Natural killer cell (primary cell): ENCODE measurements at regions of chr18 and their contacts with region 1.

Region 1: DNA sequence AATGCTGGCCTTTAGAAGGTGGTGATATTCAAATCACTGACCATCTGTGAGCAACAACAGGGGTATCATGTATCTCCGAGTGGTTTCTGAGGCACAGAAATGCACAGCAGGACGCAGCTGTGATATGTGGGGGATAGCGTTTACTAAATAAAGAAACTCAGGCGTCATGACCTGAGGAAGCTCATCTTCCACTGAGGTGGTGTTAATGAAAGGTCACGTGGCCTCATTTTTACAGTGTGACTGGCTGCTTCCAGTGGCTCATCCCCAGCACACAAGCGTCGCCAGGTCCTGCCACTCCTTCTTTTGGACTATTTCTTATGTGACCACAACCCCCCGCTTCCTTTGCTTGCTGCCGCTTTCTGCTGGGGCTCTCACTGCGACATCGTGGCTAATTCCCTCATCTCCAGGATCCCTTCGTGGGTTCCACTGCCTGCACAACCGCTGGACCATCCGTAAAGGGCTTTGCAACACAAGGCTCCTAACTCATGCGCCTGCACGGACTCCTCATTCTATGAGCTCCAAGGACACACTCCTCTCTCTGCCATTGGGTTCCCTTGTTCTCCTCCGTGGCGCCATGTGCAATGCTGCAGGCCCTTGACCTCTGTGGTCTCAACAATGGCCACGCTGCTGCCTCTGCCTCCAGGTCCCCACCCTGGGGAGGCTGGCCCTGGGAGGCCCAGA is 109.3 kb downstream of the MBP start:
- DNase-seq: no peak
- ATAC-seq: peak; percentile 25 to 81 (median 78)
- H3K4me3 ChIP-seq: no peak overlapping the region
- H3K4me3 Mint-ChIP-seq: peak overlapping the region; percentile 77
- H3K27ac ChIP-seq: no peak overlapping the region
- H3K27ac Mint-ChIP-seq: peak overlapping the region; percentile 82 to 89
- H3K4me1 ChIP-seq: peaks cover 52% of the 10 kb centered on the region
- H3K4me1 Mint-ChIP-seq: peaks cover 66 to 77% of the 10 kb centered on the region in 2 donors
- H3K27me3 ChIP-seq: no peaks in the 10 kb centered on the region
- H3K27me3 Mint-ChIP-seq: no peaks in the 10 kb centered on the region
- CTCF ChIP-seq: no peak

Region 2: DNA sequence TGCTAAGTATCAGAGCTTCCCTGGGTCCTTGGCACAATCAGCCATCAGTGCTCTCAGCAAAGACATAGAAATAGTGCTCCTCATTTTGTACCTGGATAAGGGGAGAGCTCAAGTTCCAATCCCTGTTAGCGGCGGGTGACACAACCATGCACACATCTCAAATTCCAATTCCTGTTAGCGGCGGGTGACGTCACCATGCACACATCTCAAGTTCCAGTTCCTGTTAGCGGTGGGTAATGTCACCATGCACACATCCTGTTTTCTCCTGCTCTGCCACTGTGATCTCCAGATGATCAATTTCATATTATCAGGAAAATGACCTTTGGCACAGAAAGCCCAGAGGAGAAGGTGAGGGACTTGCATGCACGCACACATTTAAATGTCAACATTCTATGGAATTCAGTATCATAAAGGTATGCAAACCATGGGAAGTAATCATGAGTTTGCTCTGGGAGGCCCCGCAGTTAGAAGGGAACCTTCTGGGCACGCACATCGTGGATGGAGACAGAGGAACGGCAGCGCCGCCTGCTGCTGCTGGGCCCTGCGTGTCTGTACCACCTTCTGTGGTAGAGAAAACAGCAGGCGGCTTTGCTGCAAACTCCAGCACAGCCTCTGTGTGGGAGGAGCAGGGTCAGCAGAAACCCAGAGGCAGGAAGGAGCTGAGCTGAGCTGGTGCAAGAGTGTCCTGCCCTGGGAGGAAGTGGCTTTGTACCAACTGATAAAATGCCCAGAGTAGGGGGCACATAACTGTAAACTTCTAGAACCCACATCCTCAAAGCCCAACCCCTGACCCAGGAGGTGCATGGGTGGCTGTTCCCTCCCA is 31.6 kb after region 1 on chr18:
- intact Hi-C with region 1: loop called (anchors 5 kb)
- DNase-seq: peak; percentile 66 to 93
- ATAC-seq: peak; percentile 70 to 90 (median 84)
- H3K4me3 ChIP-seq: peak overlapping the region; percentile 3
- H3K4me3 Mint-ChIP-seq: peak overlapping the region; percentile 79
- H3K27ac ChIP-seq: peak overlapping the region; percentile 92
- H3K27ac Mint-ChIP-seq: peak overlapping the region; percentile 87 to 98
- H3K4me1 ChIP-seq: peaks cover 81% of the 10 kb centered on the region
- H3K4me1 Mint-ChIP-seq: peaks cover 73 to 77% of the 10 kb centered on the region in 2 donors
- H3K27me3 ChIP-seq: no peaks in the 10 kb centered on the region
- H3K27me3 Mint-ChIP-seq: no peaks in the 10 kb centered on the region
- CTCF ChIP-seq: peak; percentile 60